Heart right ventricle (tissue), 16 donors: ENCODE measurements at regions of chr11 and their contacts with region 1.

Region 1: DNA sequence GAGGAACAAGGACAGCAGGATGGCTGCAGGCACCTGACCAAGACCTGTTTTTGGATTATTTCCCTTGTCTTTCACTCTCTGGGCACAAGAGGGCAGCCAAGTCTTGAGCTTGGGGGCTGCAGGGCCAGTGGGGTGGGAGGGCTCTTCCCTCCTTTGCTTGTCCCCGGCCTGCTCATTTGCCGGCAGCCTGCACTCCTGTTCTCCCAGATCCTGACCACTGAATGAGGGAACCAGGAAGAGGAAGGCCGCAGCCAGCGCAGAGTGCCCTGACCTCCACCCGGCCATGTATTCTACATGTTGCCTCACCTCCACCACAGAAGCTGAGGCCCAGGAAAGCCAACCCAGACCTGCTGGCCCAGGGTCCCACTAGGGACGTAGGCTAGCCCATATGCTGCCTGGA is 15.5 kb upstream of the NNMT start:
- DNase-seq: peak; percentile 41 to 68
- ATAC-seq: peak; percentile 74 to 92 (median 86)
- H3K4me3 ChIP-seq: no peak overlapping the region
- H3K27ac ChIP-seq: peak overlapping the region in 7 of 10 donors; percentile 18 to 79 (median 58)
- H3K4me1 ChIP-seq: peaks cover 4 to 30% (median 21%) of the 10 kb centered on the region in 9 donors
- H3K27me3 ChIP-seq: no peaks in the 10 kb centered on the region
- CTCF ChIP-seq: peak; percentile 48 to 83 (median 71)

Region 2: GRCh38 chr11:113593698-113594308 is 686.9 kb before region 1 on chr11:
- intact Hi-C with region 1: no loop called
- DNase-seq: no peak
- ATAC-seq: peak in 3 of 8 donors; percentile 17 to 53 (median 44)
- H3K4me3 ChIP-seq: no peak overlapping the region
- H3K27ac ChIP-seq: no peak overlapping the region
- H3K4me1 ChIP-seq: peaks cover 0 to 6% (median 0%) of the 10 kb centered on the region in 9 donors
- H3K27me3 ChIP-seq: no peaks in the 10 kb centered on the region
- CTCF ChIP-seq: no peak

Region 3: DNA sequence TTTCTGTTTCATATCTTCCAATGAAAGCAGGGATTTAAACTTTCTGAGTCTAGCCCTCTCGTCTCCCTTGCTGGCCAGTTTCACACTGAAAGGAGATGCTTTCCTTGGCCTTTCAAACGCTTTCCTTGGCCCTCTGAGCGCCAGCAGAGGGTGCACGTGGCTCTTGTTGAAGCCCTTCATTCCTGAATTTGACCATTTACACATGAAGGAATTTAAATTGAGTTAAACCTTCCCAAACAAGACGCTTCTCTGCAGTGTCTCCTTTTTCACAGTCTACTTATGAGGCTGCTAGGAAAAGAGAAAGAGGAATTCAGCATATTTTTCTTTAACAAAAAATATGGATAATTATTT is 37.1 kb after region 1 on chr11:
- intact Hi-C with region 1: loop called in 2 of 10 experiments (anchors 2 to 5 kb)
- DNase-seq: peak; percentile 31 to 53
- ATAC-seq: peak in 6 of 8 donors; percentile 48 to 83 (median 74)
- H3K4me3 ChIP-seq: peak overlapping the region in 1 of 10 donors; percentile 6
- H3K27ac ChIP-seq: peak overlapping the region in 9 of 10 donors; percentile 30 to 75 (median 54)
- H3K4me1 ChIP-seq: peaks cover 0 to 68% (median 31%) of the 10 kb centered on the region in 9 donors
- H3K27me3 ChIP-seq: peaks cover 0 to 3% (median 0%) of the 10 kb centered on the region in 7 donors
- CTCF ChIP-seq: peak in 7 of 9 donors; percentile 31 to 75 (median 42)

Region 4: GRCh38 chr11:114330373-114330772 is 49.7 kb after region 1 on chr11:
- intact Hi-C with region 1: loop called in 1 of 10 experiments (anchors 10 kb)
- DNase-seq: no peak
- ATAC-seq: no peak
- H3K4me3 ChIP-seq: no peak overlapping the region
- H3K27ac ChIP-seq: no peak overlapping the region
- H3K4me1 ChIP-seq: no peaks in the 10 kb centered on the region
- H3K27me3 ChIP-seq: peaks cover 0 to 5% (median 0%) of the 10 kb centered on the region in 7 donors
- CTCF ChIP-seq: no peak

Region 5: GRCh38 chr11:114439229-114440120 is 158.8 kb after region 1 on chr11 and contains the start of gene REXO2:
- intact Hi-C with region 1: loop called in 1 of 10 experiments (anchors 10 kb)
- DNase-seq: peak; percentile 96
- ATAC-seq: peak; percentile 98 to 99 (median 99)
- H3K4me3 ChIP-seq: peak within 1 kb of the TSS; percentile 71 to 99 (median 85)
- H3K27ac ChIP-seq: peak within 1 kb of the TSS; percentile 69 to 91 (median 86)
- H3K4me1 ChIP-seq: peaks cover 4 to 46% (median 32%) of the 10 kb centered on the region in 9 donors
- H3K27me3 ChIP-seq: no peaks in the 10 kb centered on the region
- CTCF ChIP-seq: peak in 7 of 9 donors; percentile 18 to 62 (median 40)
- total RNA-seq, gene REXO2: 140 to 204 (median 174) TPM